Natural killer cell (primary cell): ENCODE measurements at regions of chr5 and their contacts with region 1.

Region 1: DNA sequence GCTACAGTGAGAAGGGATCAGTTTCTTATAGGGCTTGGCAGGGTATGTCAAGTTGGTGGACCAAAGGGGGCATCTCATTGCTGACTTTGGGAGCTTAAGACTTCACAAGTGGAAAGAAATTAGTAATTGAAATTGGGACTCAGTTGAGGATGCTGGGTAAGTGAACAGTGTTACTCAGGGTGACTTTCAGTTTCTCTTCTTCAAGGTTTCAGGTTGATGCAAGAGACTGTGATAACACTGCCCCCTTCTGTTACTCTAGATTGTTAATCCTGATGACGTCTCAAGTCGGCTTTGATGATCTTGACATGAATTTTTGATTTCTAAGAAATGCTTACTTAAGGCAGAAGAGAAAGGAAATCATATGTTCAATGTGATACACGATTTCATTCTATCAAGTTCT is 21.3 kb downstream of the KCTD16 start:
- DNase-seq: peak in 1 of 2 donors; percentile 92
- ATAC-seq: peak; percentile 72 to 89 (median 75)
- H3K4me3 ChIP-seq: no peak overlapping the region
- H3K4me3 Mint-ChIP-seq: no peak overlapping the region
- H3K27ac ChIP-seq: peak overlapping the region; percentile 76
- H3K27ac Mint-ChIP-seq: no peak overlapping the region
- H3K4me1 ChIP-seq: peaks cover 17% of the 10 kb centered on the region
- H3K4me1 Mint-ChIP-seq: peaks cover 30 to 37% of the 10 kb centered on the region in 2 donors
- H3K27me3 ChIP-seq: no peaks in the 10 kb centered on the region
- H3K27me3 Mint-ChIP-seq: peaks cover 13 to 14% of the 10 kb centered on the region in 2 donors
- CTCF ChIP-seq: peak; percentile 59

Region 2: GRCh38 chr5:143200781-143201398 is 991.1 kb before region 1 on chr5:
- intact Hi-C with region 1: no loop called
- DNase-seq: no peak
- ATAC-seq: peak in 1 of 3 donors; percentile 26
- H3K4me3 ChIP-seq: no peak overlapping the region
- H3K4me3 Mint-ChIP-seq: no peak overlapping the region
- H3K27ac ChIP-seq: no peak overlapping the region
- H3K27ac Mint-ChIP-seq: no peak overlapping the region
- H3K4me1 ChIP-seq: no peaks in the 10 kb centered on the region
- H3K4me1 Mint-ChIP-seq: peaks cover 40 to 50% of the 10 kb centered on the region in 2 donors
- H3K27me3 ChIP-seq: no peaks in the 10 kb centered on the region
- H3K27me3 Mint-ChIP-seq: no peaks in the 10 kb centered on the region
- CTCF ChIP-seq: no peak

Region 3: GRCh38 chr5:144170276-144171024 is 21.5 kb before region 1 on chr5 and contains the starts of genes KCTD16 and YIPF5:
- intact Hi-C with region 1: loop called (anchors 1 kb)
- DNase-seq: peak; percentile 89 to 99
- ATAC-seq: peak; percentile 92 to 96 (median 93)
- H3K4me3 ChIP-seq: peak within 1 kb of the TSS; percentile 84
- H3K4me3 Mint-ChIP-seq: peak within 1 kb of the TSS; percentile 94
- H3K27ac ChIP-seq: peak within 1 kb of the TSS; percentile 87
- H3K27ac Mint-ChIP-seq: peak within 1 kb of the TSS; percentile 91 to 97
- H3K4me1 ChIP-seq: peaks cover 4% of the 10 kb centered on the region
- H3K4me1 Mint-ChIP-seq: peaks cover 30 to 41% of the 10 kb centered on the region in 2 donors
- H3K27me3 ChIP-seq: no peaks in the 10 kb centered on the region
- H3K27me3 Mint-ChIP-seq: peaks cover 12 to 18% of the 10 kb centered on the region in 2 donors
- CTCF ChIP-seq: no peak
- total RNA-seq, gene KCTD16: 0.16 TPM in 1 of 3 donors, not detected in the others
- total RNA-seq, gene YIPF5: 19.8 to 26.0 (median 24.6) TPM